Mammary epithelial cell (primary cell): ENCODE measurements at regions of chr12 and their contacts with region 1.

Region 1: DNA sequence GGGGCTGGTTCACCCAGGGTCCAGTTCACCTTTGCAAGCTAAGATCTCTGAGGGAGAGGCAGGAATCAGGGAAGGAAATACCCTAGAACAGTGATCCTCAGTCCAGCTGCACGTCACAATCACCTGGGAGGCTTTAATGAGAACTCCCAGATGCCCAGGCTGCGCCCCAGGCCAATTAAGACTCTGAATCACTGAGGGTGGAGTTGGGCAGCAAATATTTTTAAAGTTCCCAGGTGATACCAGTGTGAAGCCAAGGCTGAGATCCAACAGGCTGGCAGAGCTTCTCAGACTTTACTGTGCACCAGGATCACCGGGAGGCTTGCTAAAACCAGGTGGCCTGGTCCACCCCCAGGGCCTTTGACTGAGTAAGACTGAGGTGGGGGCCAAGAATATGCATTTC is 23.8 kb downstream of the MYL2 start:
- DNase-seq: peak; percentile 98
- H3K4me3 ChIP-seq: no peak overlapping the region
- H3K27ac ChIP-seq: peak overlapping the region; percentile 90
- H3K4me1 ChIP-seq: peaks cover 30% of the 10 kb centered on the region
- H3K27me3 ChIP-seq: no peaks in the 10 kb centered on the region
- CTCF ChIP-seq: no peak

Region 2: GRCh38 chr12:110860833-110861296 is 35.7 kb before region 1 on chr12:
- CTCF ChIA-PET with region 1: no interaction called
- dilution Hi-C with region 1: no loop called
- in situ Hi-C with region 1: no loop called
- intact Hi-C with region 1: no loop called
- DNase-seq: no peak
- H3K4me3 ChIP-seq: no peak overlapping the region
- H3K27ac ChIP-seq: no peak overlapping the region
- H3K4me1 ChIP-seq: no peaks in the 10 kb centered on the region
- H3K27me3 ChIP-seq: no peaks in the 10 kb centered on the region
- CTCF ChIP-seq: no peak

Region 3: GRCh38 chr12:110917466-110917865 is 20.9 kb after region 1 on chr12:
- CTCF ChIA-PET with region 1: no interaction called
- dilution Hi-C with region 1: no loop called
- in situ Hi-C with region 1: no loop called
- intact Hi-C with region 1: loop called (anchors 2 kb)
- DNase-seq: peak; percentile 73
- H3K4me3 ChIP-seq: no peak overlapping the region
- H3K27ac ChIP-seq: peak overlapping the region; percentile 58
- H3K4me1 ChIP-seq: peaks cover 18% of the 10 kb centered on the region
- H3K27me3 ChIP-seq: no peaks in the 10 kb centered on the region
- CTCF ChIP-seq: no peak

Region 4: DNA sequence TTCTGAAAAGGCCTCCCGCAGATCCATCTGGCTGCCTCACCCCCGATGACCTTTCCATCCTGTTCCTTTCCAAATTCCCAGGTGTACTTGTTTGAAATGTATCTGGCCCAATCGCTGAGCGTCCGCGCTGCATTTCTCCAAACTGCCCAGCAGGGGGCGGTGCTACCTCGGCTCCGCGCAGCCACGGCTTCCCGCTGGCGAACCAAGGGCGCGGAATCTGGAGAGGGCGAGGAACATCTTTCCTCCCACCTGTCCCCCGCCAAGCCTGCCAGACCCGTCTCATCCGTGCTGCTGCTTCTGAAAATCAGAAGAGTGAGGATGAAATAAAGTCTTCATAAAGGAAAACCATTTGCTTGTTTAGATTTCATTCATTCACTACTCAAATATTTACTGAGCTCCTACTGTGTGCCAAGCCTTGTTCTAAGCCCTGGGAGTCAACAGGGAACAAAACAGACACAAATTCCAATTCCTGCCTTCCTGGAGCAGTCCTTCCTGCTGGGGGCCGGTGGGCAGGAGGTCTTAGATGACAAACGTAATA is 40.6 kb after region 1 on chr12:
- CTCF ChIA-PET with region 1: no interaction called
- dilution Hi-C with region 1: no loop called
- in situ Hi-C with region 1: no loop called
- intact Hi-C with region 1: loop called (anchors 1 kb)
- DNase-seq: peak; percentile 33
- H3K4me3 ChIP-seq: no peak overlapping the region
- H3K27ac ChIP-seq: no peak overlapping the region
- H3K4me1 ChIP-seq: peaks cover 20% of the 10 kb centered on the region
- H3K27me3 ChIP-seq: no peaks in the 10 kb centered on the region
- CTCF ChIP-seq: peak; percentile 94 to 96

Region 5: GRCh38 chr12:110960795-110961194 is 64.2 kb after region 1 on chr12:
- CTCF ChIA-PET with region 1: no interaction called
- dilution Hi-C with region 1: no loop called
- in situ Hi-C with region 1: no loop called
- intact Hi-C with region 1: no loop called
- DNase-seq: no peak
- H3K4me3 ChIP-seq: no peak overlapping the region
- H3K27ac ChIP-seq: no peak overlapping the region
- H3K4me1 ChIP-seq: no peaks in the 10 kb centered on the region
- H3K27me3 ChIP-seq: no peaks in the 10 kb centered on the region
- CTCF ChIP-seq: no peak

Region 6: GRCh38 chr12:111174251-111174960 is 277.8 kb after region 1 on chr12:
- CTCF ChIA-PET with region 1: no interaction called
- dilution Hi-C with region 1: no loop called
- in situ Hi-C with region 1: no loop called
- intact Hi-C with region 1: loop called (anchors 1 kb)
- DNase-seq: no peak
- H3K4me3 ChIP-seq: no peak overlapping the region
- H3K27ac ChIP-seq: no peak overlapping the region
- H3K4me1 ChIP-seq: no peaks in the 10 kb centered on the region
- H3K27me3 ChIP-seq: no peaks in the 10 kb centered on the region
- CTCF ChIP-seq: peak; percentile 4 to 55

Region 7: GRCh38 chr12:111298582-111299436 is 402.2 kb after region 1 on chr12:
- CTCF ChIA-PET with region 1: no interaction called
- dilution Hi-C with region 1: no loop called
- in situ Hi-C with region 1: no loop called
- intact Hi-C with region 1: loop called (anchors 1 kb)
- DNase-seq: peak; percentile 22
- H3K4me3 ChIP-seq: no peak overlapping the region
- H3K27ac ChIP-seq: no peak overlapping the region
- H3K4me1 ChIP-seq: no peaks in the 10 kb centered on the region
- H3K27me3 ChIP-seq: no peaks in the 10 kb centered on the region
- CTCF ChIP-seq: peak; percentile 72 to 85

Region 8: GRCh38 chr12:111313833-111314259 is 417.3 kb after region 1 on chr12:
- CTCF ChIA-PET with region 1: interaction called, 9 read pairs
- dilution Hi-C with region 1: no loop called
- in situ Hi-C with region 1: loop called (anchors 5 kb)
- intact Hi-C with region 1: loop called (anchors 1 kb)
- DNase-seq: peak; percentile 36
- H3K4me3 ChIP-seq: no peak overlapping the region
- H3K27ac ChIP-seq: no peak overlapping the region
- H3K4me1 ChIP-seq: no peaks in the 10 kb centered on the region
- H3K27me3 ChIP-seq: peaks cover 1% of the 10 kb centered on the region
- CTCF ChIP-seq: peak; percentile 85 to 97

Region 9: GRCh38 chr12:111434680-111435338 is 538.2 kb after region 1 on chr12:
- CTCF ChIA-PET with region 1: no interaction called
- dilution Hi-C with region 1: no loop called
- in situ Hi-C with region 1: no loop called
- intact Hi-C with region 1: loop called (anchors 10 kb)
- DNase-seq: peak; percentile 32
- H3K4me3 ChIP-seq: no peak overlapping the region
- H3K27ac ChIP-seq: no peak overlapping the region
- H3K4me1 ChIP-seq: peaks cover 56% of the 10 kb centered on the region
- H3K27me3 ChIP-seq: no peaks in the 10 kb centered on the region
- CTCF ChIP-seq: no peak